ENCODE measurements at regions of chr14 and their contacts with region 1.

Region 1: DNA sequence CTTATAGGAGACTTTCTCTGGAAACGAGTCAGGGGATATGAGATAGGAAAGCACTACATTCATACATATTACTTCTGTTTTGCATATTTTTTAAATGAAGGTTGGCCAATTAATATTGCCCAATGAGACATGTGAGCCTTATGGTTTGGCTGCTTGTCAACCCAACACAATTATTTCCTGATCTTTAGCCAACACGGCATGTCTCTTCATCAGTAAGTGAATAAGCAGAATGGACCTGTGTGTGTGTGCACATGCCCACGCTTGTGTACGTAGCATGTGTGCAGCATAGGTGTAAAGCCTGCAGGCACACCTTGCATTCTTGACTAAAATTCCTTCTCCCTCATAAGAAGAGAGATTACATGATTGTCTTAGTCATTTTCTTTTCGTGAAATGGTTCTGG is 88.3 kb downstream of the STON2 start:
- DNase-seq: peak; percentile 33 to 40 (median 40)
- H3K4me3 ChIP-seq: no peak overlapping the region
- H3K4me3 Mint-ChIP-seq: peak overlapping the region in 1 of 2 donors; percentile 63
- H3K27ac ChIP-seq: no peak overlapping the region
- H3K27ac Mint-ChIP-seq: peak overlapping the region in 5 of 7 donors; percentile 40 to 73 (median 42)
- H3K4me1 ChIP-seq: peaks cover 19 to 22% of the 10 kb centered on the region in 2 donors
- H3K4me1 Mint-ChIP-seq: peaks cover 29% of the 10 kb centered on the region
- H3K27me3 ChIP-seq: peaks cover 0 to 2% of the 10 kb centered on the region in 2 donors
- H3K27me3 Mint-ChIP-seq: peaks cover 3 to 7% (median 3%) of the 10 kb centered on the region in 3 donors
- CTCF ChIP-seq: no peak

Region 2: DNA sequence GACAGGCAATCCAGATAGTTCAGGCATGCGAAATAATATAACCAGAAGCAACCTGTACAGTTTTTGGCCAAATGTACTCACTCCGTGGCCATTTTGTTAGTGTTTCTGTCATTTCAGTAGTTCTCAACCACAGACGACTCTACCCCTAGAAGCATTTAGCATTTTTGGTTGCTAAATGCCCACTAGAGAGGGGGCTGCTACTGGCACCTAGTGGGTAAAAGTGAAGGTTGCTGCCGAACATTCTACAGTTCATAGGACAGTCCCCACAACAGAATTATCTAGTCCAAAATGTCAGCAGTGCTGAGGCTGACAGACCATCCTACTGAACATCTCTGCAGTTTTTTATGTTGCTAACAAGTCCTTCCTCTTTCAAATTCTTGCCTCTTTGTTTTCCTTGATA is 249.0 kb before region 1 on chr14:
- intact Hi-C with region 1: no loop called
- DNase-seq: peak; percentile 9 to 29 (median 15)
- H3K4me3 ChIP-seq: no peak overlapping the region
- H3K4me3 Mint-ChIP-seq: no peak overlapping the region
- H3K27ac ChIP-seq: no peak overlapping the region
- H3K27ac Mint-ChIP-seq: no peak overlapping the region
- H3K4me1 ChIP-seq: no peaks in the 10 kb centered on the region
- H3K4me1 Mint-ChIP-seq: no peaks in the 10 kb centered on the region
- H3K27me3 ChIP-seq: no peaks in the 10 kb centered on the region
- H3K27me3 Mint-ChIP-seq: no peaks in the 10 kb centered on the region
- CTCF ChIP-seq: peak; percentile 39

Region 3: GRCh38 chr14:81276073-81277069 is 35.4 kb before region 1 on chr14:
- intact Hi-C with region 1: loop called in 1 of 2 experiments (anchors 5 kb)
- DNase-seq: no peak
- H3K4me3 ChIP-seq: no peak overlapping the region
- H3K4me3 Mint-ChIP-seq: no peak overlapping the region
- H3K27ac ChIP-seq: no peak overlapping the region
- H3K27ac Mint-ChIP-seq: no peak overlapping the region
- H3K4me1 ChIP-seq: peaks cover 0 to 5% of the 10 kb centered on the region in 2 donors
- H3K4me1 Mint-ChIP-seq: peaks cover 7% of the 10 kb centered on the region
- H3K27me3 ChIP-seq: no peaks in the 10 kb centered on the region
- H3K27me3 Mint-ChIP-seq: peaks cover 0 to 3% (median 1%) of the 10 kb centered on the region in 3 donors
- CTCF ChIP-seq: no peak

Region 4: DNA sequence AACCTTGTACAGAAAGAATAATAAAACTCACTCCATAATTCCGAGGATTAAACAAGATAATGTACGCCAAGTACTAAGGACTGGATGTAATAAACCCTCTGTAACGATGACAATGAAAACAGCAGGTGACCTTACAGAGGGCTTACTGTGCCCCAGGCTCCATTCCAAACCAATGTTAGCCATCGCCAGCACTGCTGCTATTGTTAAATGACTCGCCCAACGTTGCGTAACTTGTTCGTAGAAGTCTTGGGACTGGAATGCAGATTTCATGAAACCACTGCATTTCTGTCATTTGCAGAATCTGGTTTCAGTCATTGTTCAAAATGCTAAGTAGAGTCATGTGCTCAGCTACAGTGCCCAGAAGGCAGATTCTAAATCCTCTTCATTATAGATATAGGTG is 89.1 kb after region 1 on chr14:
- intact Hi-C with region 1: loop called in 1 of 2 experiments (anchors 5 kb)
- DNase-seq: peak; percentile 81 to 92 (median 87)
- H3K4me3 ChIP-seq: peak overlapping the region in 1 of 3 experiments; percentile 20
- H3K4me3 Mint-ChIP-seq: peak overlapping the region in 1 of 2 donors; percentile 87
- H3K27ac ChIP-seq: peak overlapping the region in 1 of 2 donors; percentile 79
- H3K27ac Mint-ChIP-seq: peak overlapping the region; percentile 82 to 95 (median 92)
- H3K4me1 ChIP-seq: peaks cover 33 to 34% of the 10 kb centered on the region in 2 donors
- H3K4me1 Mint-ChIP-seq: peaks cover 40% of the 10 kb centered on the region
- H3K27me3 ChIP-seq: peaks cover 69 to 73% of the 10 kb centered on the region in 2 donors
- H3K27me3 Mint-ChIP-seq: peaks cover 77 to 85% (median 77%) of the 10 kb centered on the region in 3 donors
- CTCF ChIP-seq: no peak

Measured in CD14-positive monocyte (primary cell).